ENCODE measurements at regions of chr19 and their contacts with region 1.

Region 1: DNA sequence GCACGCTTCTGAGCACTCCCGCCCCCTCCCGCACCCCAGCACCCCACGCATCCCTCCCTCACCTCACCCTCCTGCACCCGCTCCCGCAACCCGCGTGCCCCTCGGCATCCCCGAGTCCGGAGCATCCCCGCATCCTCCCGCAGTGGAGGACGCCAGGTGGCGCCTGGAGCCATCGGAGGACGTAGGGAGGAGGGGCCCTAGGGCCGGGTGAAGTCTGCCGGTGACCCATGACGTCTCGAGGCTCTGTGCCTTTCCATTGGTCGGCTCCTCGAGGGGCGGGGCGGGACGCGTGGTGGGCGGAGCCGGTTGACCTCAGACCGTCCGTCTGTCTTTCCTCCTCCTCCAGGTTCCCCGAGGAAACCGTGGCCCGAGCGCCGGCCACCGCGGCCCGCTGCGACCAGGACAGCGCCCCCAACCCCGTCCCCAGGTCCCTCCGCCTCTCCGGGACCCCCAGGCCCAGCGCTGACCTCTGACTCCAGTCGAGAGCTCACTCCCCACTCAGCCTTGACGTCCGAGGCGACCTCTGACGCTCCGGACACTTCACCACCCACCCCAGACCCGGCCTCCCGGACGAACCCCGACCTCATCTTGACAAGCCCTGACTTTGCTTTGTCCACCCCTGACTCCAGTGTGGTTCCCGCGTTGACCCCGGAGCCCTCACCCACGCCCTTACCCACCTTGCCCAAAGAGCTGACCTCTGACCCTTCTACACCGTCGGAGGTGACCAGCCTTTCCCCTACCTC is 19.9 kb downstream of the SBK2 start:
- DNase-seq: peak; percentile 98
- H3K4me3 ChIP-seq: peak overlapping the region; percentile 58 to 70 (median 60)
- H3K27ac ChIP-seq: peak overlapping the region; percentile 87 to 93 (median 90)
- H3K4me1 ChIP-seq: peaks cover 9 to 25% (median 18%) of the 10 kb centered on the region in 4 donors
- H3K27me3 ChIP-seq: no peaks in the 10 kb centered on the region
- CTCF ChIP-seq: peak; percentile 77 to 94 (median 88)
- EP300 ChIP-seq: no peak
- POLR2A ChIP-seq: no peak

Region 2: GRCh38 chr19:55494172-55494761 is 22.8 kb before region 1 on chr19:
- intact Hi-C with region 1: no loop called
- DNase-seq: no peak
- H3K4me3 ChIP-seq: peak overlapping the region; percentile 25 to 50 (median 39)
- H3K27ac ChIP-seq: peak overlapping the region; percentile 72 to 98 (median 96)
- H3K4me1 ChIP-seq: peaks cover 16 to 76% (median 57%) of the 10 kb centered on the region in 4 donors
- H3K27me3 ChIP-seq: peaks cover 0 to 3% (median 0%) of the 10 kb centered on the region in 4 donors
- CTCF ChIP-seq: no peak
- EP300 ChIP-seq: no peak
- POLR2A ChIP-seq: no peak

Region 3: DNA sequence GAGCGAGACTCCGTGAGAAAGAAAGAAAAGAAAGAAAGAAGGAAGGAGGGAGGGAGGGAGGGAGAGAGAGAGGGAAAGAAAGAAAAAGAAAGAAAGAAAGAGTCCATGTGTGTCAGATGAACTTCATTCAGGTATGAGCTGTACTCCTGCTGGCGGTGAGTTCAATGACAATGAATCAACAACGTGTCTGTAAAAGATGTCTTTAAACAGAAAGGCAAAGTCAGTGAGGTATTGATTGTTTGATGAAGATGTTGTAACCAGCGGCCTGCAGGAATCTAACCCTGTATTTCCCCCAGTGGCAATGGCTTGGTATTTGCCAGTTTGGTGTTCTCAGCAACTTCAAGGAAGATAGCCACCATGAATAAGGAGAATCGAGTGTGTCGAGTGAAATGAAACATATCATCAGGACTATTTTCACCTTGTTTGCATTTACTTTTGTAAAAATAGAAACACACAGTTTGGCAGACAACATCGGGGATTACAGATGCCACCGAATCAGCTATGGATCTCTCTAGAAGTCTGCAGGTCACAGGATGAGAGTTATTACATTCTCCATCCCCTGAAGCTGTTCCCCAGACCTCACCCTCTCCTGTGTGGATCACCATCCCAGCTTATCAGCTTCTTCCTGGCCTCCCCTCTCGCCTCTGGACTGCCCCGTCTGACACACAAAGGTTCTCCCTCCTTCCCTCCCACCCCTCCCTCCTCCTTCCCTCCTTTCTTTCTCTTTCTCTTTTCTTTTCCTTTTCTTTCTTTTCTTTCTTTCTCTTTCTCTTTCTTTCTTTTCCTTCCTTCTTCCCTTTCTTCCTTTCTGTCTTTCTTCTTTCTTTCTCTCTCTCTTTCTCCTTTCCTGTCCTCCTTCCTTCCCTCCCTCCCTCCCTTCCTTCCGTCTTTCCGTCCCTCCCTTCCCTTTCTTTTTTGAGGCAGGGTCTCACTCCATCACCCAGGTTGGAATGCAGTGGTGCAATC is 36.5 kb after region 1 on chr19:
- intact Hi-C with region 1: no loop called
- DNase-seq: no peak
- H3K4me3 ChIP-seq: no peak overlapping the region
- H3K27ac ChIP-seq: no peak overlapping the region
- H3K4me1 ChIP-seq: peaks cover 0 to 10% (median 6%) of the 10 kb centered on the region in 4 donors
- H3K27me3 ChIP-seq: peaks cover 0 to 59% (median 9%) of the 10 kb centered on the region in 4 donors
- CTCF ChIP-seq: no peak
- EP300 ChIP-seq: no peak
- POLR2A ChIP-seq: no peak

Region 4: DNA sequence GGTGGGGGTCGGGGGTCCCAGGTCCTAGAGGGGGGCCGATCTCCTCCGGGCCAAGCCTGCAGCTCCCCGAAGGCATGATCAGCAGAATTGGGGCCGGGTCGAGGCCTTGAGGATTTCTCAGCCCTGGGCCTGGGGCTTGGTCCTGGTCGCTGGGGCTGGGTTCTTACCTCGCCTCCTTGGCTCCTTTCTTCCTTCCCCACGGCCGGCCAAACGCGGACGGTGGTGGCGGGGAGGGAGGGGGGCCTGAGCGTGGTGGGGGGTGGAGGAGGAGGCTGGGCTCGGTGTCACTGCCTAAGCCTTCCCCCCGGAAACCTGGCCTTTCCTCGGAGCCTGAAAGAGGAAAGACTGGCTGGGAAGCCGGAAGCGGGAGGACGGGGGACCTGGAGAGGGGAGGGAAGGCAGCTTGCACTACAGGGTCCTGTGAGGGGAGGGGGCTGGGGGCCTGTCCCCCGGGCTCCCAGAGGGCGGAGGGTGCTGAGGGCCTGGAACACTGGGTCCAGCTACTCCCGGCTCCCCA is 63.6 kb after region 1 on chr19 and contains the start of gene ZNF579:
- intact Hi-C with region 1: loop called (anchors 2 kb)
- DNase-seq: peak; percentile 96
- H3K4me3 ChIP-seq: peak within 1 kb of the TSS; percentile 67 to 98 (median 80)
- H3K27ac ChIP-seq: peak within 1 kb of the TSS; percentile 86 to 95 (median 90)
- H3K4me1 ChIP-seq: peaks cover 14 to 36% (median 31%) of the 10 kb centered on the region in 4 donors
- H3K27me3 ChIP-seq: peaks cover 0 to under 1% (median 0%) of the 10 kb centered on the region in 4 donors
- CTCF ChIP-seq: peak in 1 of 3 experiments; percentile 9
- EP300 ChIP-seq: no peak
- POLR2A ChIP-seq: no peak
- total RNA-seq, gene ZNF579: 4.2 to 11.1 (median 8.1) TPM

Region 5: GRCh38 chr19:55605637-55606470 is 88.8 kb after region 1 on chr19 and contains the start of gene ZNF865:
- intact Hi-C with region 1: loop called (anchors 2 kb)
- DNase-seq: peak; percentile 95
- H3K4me3 ChIP-seq: peak within 1 kb of the TSS; percentile 69 to 93 (median 89)
- H3K27ac ChIP-seq: peak within 1 kb of the TSS; percentile 89 to 99 (median 96)
- H3K4me1 ChIP-seq: peaks cover 33 to 74% (median 52%) of the 10 kb centered on the region in 4 donors
- H3K27me3 ChIP-seq: no peaks in the 10 kb centered on the region
- CTCF ChIP-seq: peak; percentile 62 to 76 (median 72)
- EP300 ChIP-seq: no peak
- POLR2A ChIP-seq: peak; percentile 13
- total RNA-seq, gene ZNF865: 7.5 to 15.4 (median 10.2) TPM

Region 6: DNA sequence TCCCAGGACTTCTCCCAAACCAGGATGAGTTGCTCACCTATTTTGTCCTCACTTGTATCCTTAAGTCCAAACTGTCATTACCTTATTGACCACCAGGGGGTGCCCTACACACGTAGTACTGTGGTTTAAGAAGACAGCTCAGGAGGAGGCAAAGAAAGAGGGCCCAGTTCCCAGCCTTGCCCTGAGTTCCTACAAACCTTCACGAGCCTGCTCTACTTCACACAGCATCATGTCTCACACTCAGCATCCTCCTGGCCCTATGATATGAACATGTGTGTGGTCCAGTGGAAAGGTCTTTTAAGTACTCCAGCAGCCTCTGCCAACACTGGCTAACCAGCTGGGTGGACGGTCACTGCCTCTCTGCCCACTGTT is 115.4 kb after region 1 on chr19:
- intact Hi-C with region 1: loop called (anchors 1 kb)
- DNase-seq: peak; percentile 99
- H3K4me3 ChIP-seq: no peak overlapping the region
- H3K27ac ChIP-seq: peak overlapping the region; percentile 57 to 68 (median 62)
- H3K4me1 ChIP-seq: peaks cover 25 to 44% (median 38%) of the 10 kb centered on the region in 4 donors
- H3K27me3 ChIP-seq: no peaks in the 10 kb centered on the region
- CTCF ChIP-seq: peak; percentile 89 to 97 (median 90)
- EP300 ChIP-seq: no peak
- POLR2A ChIP-seq: no peak